PC-3 (cell line): ENCODE measurements at regions of chr7 and their contacts with region 1.

Region 1: DNA sequence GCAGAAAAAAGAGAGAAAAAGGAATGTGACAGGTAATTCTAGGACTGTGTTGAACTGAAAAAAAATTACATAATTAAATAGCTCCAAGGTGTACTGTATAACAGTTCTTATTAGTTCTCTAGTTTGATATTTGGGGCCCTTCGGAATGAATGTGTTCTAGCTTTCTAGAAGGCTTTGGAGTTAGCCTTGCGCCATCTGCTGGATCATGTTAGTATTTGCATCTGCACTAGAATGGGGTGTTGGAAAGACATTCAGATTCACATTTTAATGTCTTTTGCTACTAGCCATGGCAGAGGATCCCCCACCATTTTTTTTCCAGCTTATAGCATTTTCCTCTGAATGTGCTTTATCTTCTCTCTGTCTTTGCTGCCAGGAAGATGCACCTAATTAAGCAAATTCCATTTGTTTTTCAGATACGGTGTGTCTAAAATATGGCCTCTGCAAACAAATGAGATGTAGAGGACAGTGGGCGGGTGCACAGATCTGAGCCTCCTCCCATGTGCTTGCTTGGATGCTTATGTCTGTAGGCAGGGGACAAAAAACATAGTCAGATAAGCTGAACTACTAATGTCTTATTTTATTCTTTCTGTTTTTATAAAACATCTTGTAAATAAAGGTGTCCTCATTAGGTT is 238.5 kb downstream of the PHF14 start:
- DNase-seq: peak; percentile 71
- ATAC-seq: peak; percentile 66
- H3K4me3 ChIP-seq: peak overlapping the region; percentile 45; the same call in 1 of the 2 replicates
- H3K27ac ChIP-seq: no peak overlapping the region
- H3K4me1 ChIP-seq: peaks cover 15% of the 10 kb centered on the region
- H3K27me3 ChIP-seq: no peaks in the 10 kb centered on the region
- CTCF ChIP-seq: peak; percentile 84

Region 2: DNA sequence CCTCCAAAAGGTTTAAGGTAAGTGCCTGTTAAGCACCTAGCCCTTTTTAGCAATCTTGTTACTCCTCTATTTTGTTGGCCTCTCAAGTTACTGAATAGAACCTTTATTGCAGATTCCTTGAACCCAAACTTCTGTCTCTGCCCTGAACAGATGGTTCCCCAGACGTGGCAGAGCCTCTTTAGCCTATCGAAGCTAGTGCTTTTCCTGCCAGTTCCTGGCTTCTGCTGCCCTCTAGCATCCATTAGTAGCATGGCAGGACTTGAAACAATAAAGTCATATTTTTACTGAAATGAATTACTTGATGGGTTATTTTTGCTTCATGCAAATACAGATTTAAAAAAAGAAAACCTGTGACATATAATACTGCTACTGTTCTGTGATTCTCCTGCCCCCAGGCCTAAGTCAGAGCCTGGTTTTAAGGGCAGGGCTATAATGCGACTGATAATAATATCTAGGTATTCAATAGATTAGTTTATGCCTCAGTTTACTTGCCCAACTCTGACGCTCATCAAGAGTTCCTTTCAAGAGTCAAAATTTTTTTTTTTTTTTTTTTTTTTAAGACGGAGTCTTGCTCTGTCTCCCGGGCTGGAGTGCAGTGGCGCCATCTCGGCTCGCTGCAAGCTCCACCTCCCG is 322.8 kb before region 1 on chr7:
- CTCF ChIA-PET with region 1: no interaction called
- POLR2A ChIA-PET with region 1: no interaction called
- intact Hi-C with region 1: loop called (anchors 2 kb)
- DNase-seq: peak; percentile 58
- ATAC-seq: peak; percentile 90
- H3K4me3 ChIP-seq: no peak overlapping the region
- H3K27ac ChIP-seq: no peak overlapping the region
- H3K4me1 ChIP-seq: no peaks in the 10 kb centered on the region
- H3K27me3 ChIP-seq: no peaks in the 10 kb centered on the region
- CTCF ChIP-seq: peak; percentile 82

Region 3: DNA sequence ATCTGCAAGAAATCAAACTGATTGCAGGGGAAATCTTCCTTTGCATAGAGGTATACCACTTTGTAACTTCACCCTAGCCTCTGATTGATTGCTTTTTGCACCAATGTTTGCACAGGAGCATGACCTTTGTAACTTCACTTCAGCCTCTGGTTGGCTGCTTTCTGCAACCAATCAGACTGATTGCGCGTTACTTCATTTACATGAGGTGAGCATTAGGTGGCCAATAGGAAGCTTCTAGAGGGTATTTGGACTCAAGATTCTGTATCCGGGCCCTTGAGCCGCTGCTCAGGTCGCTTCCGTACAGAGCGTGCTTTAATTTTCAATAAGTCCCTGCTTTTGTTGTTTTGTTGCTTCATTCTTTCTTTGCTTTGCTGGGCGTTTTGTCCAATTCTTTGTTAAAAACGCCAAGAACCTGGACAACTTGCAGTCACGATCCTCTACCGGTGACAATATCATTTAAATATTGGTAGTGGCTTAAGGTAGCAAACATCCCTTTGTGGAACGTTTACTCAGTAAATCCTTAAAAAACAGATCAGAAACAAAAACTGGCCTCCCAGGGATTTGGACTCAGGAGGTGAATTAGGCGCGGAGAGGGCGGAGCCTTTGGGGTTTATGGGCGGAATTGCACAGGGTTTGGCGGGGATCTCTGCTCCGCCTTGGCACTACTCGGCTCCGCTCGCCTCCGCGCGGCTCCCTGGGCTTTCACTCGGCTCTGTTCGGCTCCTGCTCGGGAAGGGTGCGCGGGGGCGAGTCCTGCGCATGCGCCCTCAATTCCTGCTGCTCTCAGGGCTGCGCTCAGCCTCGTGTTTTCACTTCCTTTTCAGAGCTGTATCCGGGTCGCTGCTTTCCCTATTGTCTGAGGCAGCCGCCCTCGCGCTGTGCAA is 238.9 kb before region 1 on chr7 and contains the start of gene PHF14:
- CTCF ChIA-PET with region 1: no interaction called
- POLR2A ChIA-PET with region 1: no interaction called
- intact Hi-C with region 1: loop called (anchors 5 kb)
- DNase-seq: peak; percentile 95
- ATAC-seq: peak; percentile 97
- H3K4me3 ChIP-seq: peak within 1 kb of the TSS; percentile 86
- H3K27ac ChIP-seq: peak within 1 kb of the TSS; percentile 95
- H3K4me1 ChIP-seq: peaks cover 20% of the 10 kb centered on the region
- H3K27me3 ChIP-seq: no peaks in the 10 kb centered on the region
- CTCF ChIP-seq: no peak
- total RNA-seq, gene PHF14: 35.4 and 42.6 TPM in 2 replicates

Region 4: DNA sequence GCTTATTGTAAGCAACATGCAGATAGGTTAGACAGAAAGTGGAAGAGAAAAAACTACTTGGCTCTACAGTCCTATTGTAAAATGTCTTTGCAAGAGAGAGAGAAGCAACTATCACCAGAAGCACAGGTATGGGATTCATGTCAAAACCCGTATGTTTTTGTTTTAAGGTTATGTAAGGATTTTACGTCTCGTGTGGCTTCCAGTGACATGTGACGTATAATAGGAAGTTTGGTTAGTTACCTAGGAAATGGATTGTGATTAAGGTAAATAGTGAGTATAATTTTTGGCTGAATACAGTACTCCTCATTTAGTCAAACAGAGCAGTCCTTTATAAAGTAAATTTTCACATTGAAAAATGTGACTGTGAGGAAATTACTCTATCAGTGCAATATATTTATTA is 176.5 kb before region 1 on chr7:
- CTCF ChIA-PET with region 1: interaction called, 3 read pairs
- POLR2A ChIA-PET with region 1: no interaction called
- intact Hi-C with region 1: loop called (anchors 10 kb)
- DNase-seq: no peak
- ATAC-seq: no peak
- H3K4me3 ChIP-seq: no peak overlapping the region
- H3K27ac ChIP-seq: no peak overlapping the region
- H3K4me1 ChIP-seq: no peaks in the 10 kb centered on the region
- H3K27me3 ChIP-seq: no peaks in the 10 kb centered on the region
- CTCF ChIP-seq: no peak

Region 5: GRCh38 chr7:11232465-11232864 is 20.3 kb after region 1 on chr7:
- CTCF ChIA-PET with region 1: no interaction called
- POLR2A ChIA-PET with region 1: no interaction called
- intact Hi-C with region 1: no loop called
- DNase-seq: peak; percentile 7
- ATAC-seq: no peak
- H3K4me3 ChIP-seq: no peak overlapping the region
- H3K27ac ChIP-seq: no peak overlapping the region
- H3K4me1 ChIP-seq: no peaks in the 10 kb centered on the region
- H3K27me3 ChIP-seq: no peaks in the 10 kb centered on the region
- CTCF ChIP-seq: no peak

Region 6: GRCh38 chr7:11252705-11253289 is 40.6 kb after region 1 on chr7:
- CTCF ChIA-PET with region 1: no interaction called
- POLR2A ChIA-PET with region 1: no interaction called
- intact Hi-C with region 1: loop called (anchors 2 kb)
- DNase-seq: peak; percentile 37
- ATAC-seq: peak; percentile 47
- H3K4me3 ChIP-seq: no peak overlapping the region
- H3K27ac ChIP-seq: no peak overlapping the region
- H3K4me1 ChIP-seq: peaks cover 34% of the 10 kb centered on the region
- H3K27me3 ChIP-seq: no peaks in the 10 kb centered on the region
- CTCF ChIP-seq: no peak

Region 7: GRCh38 chr7:11831736-11832495 is 619.7 kb after region 1 on chr7 and contains the start of gene THSD7A:
- CTCF ChIA-PET with region 1: no interaction called
- POLR2A ChIA-PET with region 1: no interaction called
- intact Hi-C with region 1: no loop called
- DNase-seq: peak; percentile 56
- ATAC-seq: peak; percentile 95
- H3K4me3 ChIP-seq: peak within 1 kb of the TSS; percentile 76
- H3K27ac ChIP-seq: no peak within 1 kb of the TSS
- H3K4me1 ChIP-seq: no peaks in the 10 kb centered on the region
- H3K27me3 ChIP-seq: no peaks in the 10 kb centered on the region
- CTCF ChIP-seq: no peak
- total RNA-seq, gene THSD7A: 0.04 and 0.06 TPM in 2 replicates